Activated naive CD4-positive, alpha-beta T cell treated with anti-CD3 and anti-CD28 coated beads for 36 hours (primary cell): ENCODE measurements at regions of chr10 and their contacts with region 1.

Region 1: DNA sequence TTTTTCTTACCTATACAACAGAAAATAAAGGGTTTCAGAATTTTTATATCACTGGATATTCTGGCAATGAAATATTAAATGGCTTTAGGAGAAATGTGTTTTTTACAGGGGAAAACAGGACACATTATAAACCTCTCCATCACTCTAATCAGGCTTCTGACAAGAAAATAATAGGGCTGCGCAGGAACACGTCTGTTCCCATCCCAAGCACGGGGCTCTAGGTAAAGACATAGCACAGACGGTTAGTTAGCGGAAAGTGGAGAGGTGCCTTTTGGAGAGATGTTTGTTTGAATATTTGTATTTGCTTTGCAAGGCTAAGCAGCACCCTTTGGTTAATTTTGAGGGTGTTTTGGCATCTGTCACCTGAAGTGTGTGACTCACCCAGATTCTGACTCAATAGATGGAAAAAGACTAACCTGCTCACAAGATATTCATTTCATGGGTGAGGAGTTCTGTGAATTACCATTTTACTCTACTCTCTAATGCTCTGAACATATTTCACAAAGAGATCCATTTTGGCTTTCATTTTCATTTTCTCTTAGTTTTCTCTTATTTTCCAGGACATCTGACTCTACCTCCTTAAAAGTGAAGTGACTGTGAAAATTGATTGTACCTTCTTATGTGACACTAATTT is 174.5 kb upstream of the AKR1E2 start:
- DNase-seq: peak; percentile 41
- H3K4me3 Mint-ChIP-seq: peak overlapping the region; percentile 10
- H3K27ac Mint-ChIP-seq: peak overlapping the region; percentile 84
- H3K4me1 Mint-ChIP-seq: peaks cover 43% of the 10 kb centered on the region
- H3K27me3 Mint-ChIP-seq: no peaks in the 10 kb centered on the region

Region 2: DNA sequence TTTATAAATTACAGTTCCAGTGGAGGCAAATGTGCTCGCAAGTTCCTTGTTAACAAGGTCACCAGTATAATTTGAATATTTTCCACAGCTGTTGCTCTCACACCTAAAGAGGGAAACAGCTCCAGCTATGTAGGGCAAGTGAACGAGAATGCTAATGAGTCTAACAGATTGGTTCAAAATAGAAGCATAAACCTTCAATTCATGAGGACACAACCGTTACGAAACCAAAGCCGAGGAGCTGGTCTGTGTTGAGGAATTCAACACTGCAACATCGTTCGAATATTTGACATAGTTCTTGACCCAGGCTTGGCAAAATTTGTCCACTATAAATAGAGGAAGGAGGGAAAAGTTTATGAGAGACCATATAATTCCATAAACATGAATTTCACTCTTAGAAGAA is 1027.8 kb before region 1 on chr10:
- CTCF ChIA-PET with region 1: no interaction called
- intact Hi-C with region 1: loop called (anchors 2 kb)
- DNase-seq: no peak
- H3K4me3 Mint-ChIP-seq: no peak overlapping the region
- H3K27ac Mint-ChIP-seq: no peak overlapping the region
- H3K4me1 Mint-ChIP-seq: peaks cover 21% of the 10 kb centered on the region
- H3K27me3 Mint-ChIP-seq: peaks cover 2% of the 10 kb centered on the region

Region 3: GRCh38 chr10:3828404-3829155 is 822.9 kb before region 1 on chr10:
- CTCF ChIA-PET with region 1: no interaction called
- intact Hi-C with region 1: loop called (anchors 1 kb)
- DNase-seq: peak; percentile 82
- H3K4me3 Mint-ChIP-seq: peak overlapping the region; percentile 52
- H3K27ac Mint-ChIP-seq: peak overlapping the region; percentile 87
- H3K4me1 Mint-ChIP-seq: peaks cover 43% of the 10 kb centered on the region
- H3K27me3 Mint-ChIP-seq: no peaks in the 10 kb centered on the region

Region 4: GRCh38 chr10:4181621-4182049 is 469.9 kb before region 1 on chr10:
- CTCF ChIA-PET with region 1: no interaction called
- intact Hi-C with region 1: loop called (anchors 1 kb)
- DNase-seq: no peak
- H3K4me3 Mint-ChIP-seq: no peak overlapping the region
- H3K27ac Mint-ChIP-seq: no peak overlapping the region
- H3K4me1 Mint-ChIP-seq: peaks cover 12% of the 10 kb centered on the region
- H3K27me3 Mint-ChIP-seq: no peaks in the 10 kb centered on the region

Region 5: GRCh38 chr10:4635388-4635787 is 16.1 kb before region 1 on chr10:
- CTCF ChIA-PET with region 1: no interaction called
- intact Hi-C with region 1: no loop called
- DNase-seq: peak; percentile 17
- H3K4me3 Mint-ChIP-seq: no peak overlapping the region
- H3K27ac Mint-ChIP-seq: no peak overlapping the region
- H3K4me1 Mint-ChIP-seq: peaks cover 5% of the 10 kb centered on the region
- H3K27me3 Mint-ChIP-seq: no peaks in the 10 kb centered on the region

Region 6: DNA sequence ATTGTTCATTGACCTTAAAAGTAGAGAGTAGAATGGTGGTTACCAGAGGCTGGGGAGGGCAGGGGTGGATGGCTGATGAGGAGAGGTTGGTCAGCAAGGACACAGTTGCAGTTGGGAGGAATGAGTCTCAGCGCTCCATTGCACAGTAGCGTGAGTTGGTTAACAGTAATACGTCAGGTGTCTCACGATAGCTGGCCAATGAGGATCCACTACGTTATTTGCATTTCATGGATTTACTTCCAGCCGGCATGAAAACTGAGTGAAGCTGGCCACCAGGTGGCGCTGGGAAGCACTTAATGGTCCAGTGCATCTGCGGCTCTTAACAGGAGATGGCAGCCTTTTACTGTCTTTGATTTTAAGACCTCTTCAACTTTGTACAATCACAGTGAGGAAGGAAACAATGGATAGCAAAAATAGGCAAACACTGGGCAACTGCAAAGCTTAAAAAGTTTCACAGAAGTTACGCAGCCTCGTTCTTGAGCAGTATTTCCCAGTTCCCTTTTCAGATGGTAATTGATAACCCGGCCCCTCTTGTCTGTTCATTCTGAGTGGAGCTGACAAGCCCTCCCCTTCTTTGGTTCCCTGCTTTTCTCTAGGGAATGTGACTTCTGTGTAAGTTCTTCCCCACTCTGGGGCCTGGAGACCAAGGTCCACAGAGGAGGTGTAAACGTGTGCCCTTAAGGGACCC is 198.2 kb after region 1 on chr10:
- CTCF ChIA-PET with region 1: no interaction called
- intact Hi-C with region 1: no loop called
- DNase-seq: peak; percentile 95
- H3K4me3 Mint-ChIP-seq: peak overlapping the region; percentile 22
- H3K27ac Mint-ChIP-seq: peak overlapping the region; percentile 37
- H3K4me1 Mint-ChIP-seq: peaks cover 6% of the 10 kb centered on the region
- H3K27me3 Mint-ChIP-seq: no peaks in the 10 kb centered on the region